ENCODE measurements at regions of chr21 and their contacts with region 1.

Region 1: GRCh38 chr21:17679002-17679600 is 66.4 kb upstream of the BTG3 start:
- DNase-seq: peak in 9 of 35 experiments; percentile 2 to 81 (median 18)
- ATAC-seq: peak; percentile 84 to 90 (median 87)
- H3K4me3 ChIP-seq: no peak overlapping the region
- H3K4me3 Mint-ChIP-seq: no peak overlapping the region
- H3K27ac ChIP-seq: no peak overlapping the region
- H3K27ac Mint-ChIP-seq: no peak overlapping the region
- H3K4me1 ChIP-seq: no peaks in the 10 kb centered on the region
- H3K4me1 Mint-ChIP-seq: no peaks in the 10 kb centered on the region
- H3K27me3 ChIP-seq: no peaks in the 10 kb centered on the region
- H3K27me3 Mint-ChIP-seq: no peaks in the 10 kb centered on the region

Region 2: GRCh38 chr21:17903029-17903806 is 224.1 kb after region 1 on chr21:
- CTCF ChIA-PET with region 1: interaction called, 16 to 23 read pairs
- POLR2A ChIA-PET with region 1: interaction called in 1 of 2 experiments, 3 read pairs
- DNase-seq: peak in 1 of 35 experiments; percentile 67
- ATAC-seq: peak in 3 of 4 experiments; percentile 47 to 65 (median 53)
- H3K4me3 ChIP-seq: no peak overlapping the region
- H3K4me3 Mint-ChIP-seq: no peak overlapping the region
- H3K27ac ChIP-seq: no peak overlapping the region
- H3K27ac Mint-ChIP-seq: no peak overlapping the region
- H3K4me1 ChIP-seq: no peaks in the 10 kb centered on the region
- H3K4me1 Mint-ChIP-seq: peaks cover 0 to 24% (median 4%) of the 10 kb centered on the region in 3 donors
- H3K27me3 ChIP-seq: no peaks in the 10 kb centered on the region
- H3K27me3 Mint-ChIP-seq: no peaks in the 10 kb centered on the region